ENCODE measurements at regions of chr11 and their contacts with region 1.

Region 1: DNA sequence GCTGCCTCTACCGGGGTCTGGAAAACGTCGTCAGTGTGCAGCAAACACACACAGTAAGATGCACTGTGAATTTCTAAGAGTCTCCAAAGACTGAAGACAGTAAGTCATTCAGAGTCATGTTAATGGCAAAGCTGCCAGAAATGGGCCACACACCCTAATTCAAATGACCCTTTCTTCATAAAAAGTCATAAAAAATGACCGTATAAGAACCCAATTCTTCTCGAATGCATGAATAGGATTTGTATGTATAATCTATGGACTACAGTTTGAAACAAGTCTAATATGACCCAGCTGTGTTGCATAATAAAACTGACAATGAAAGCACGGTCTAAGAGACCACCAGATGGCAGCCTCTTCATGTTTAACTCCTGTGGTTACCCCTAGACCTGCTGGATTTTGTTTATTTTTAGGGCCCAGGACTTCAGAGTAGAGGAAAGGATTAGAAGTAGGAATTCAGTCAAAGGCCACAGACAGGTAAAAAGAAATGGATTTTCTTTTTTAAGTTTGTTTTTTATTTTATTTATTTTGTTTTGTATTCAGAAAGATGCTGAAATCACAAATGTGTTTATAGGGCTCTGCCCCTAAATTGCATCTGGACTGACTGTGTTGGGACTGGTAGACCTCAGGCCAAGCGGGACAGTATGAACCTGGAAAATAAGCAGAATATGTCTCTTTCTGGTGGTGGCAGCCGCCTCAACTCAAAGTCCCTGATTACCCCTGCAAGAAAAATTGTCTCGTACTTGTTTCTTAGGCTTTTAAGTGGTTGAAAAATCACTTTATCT is 32.1 kb upstream of the SLC5A12 start:
- DNase-seq: peak; percentile 43 to 66 (median 58)
- ATAC-seq: peak; percentile 75
- H3K4me3 ChIP-seq: no peak overlapping the region
- H3K27ac ChIP-seq: no peak overlapping the region
- H3K4me1 ChIP-seq: no peaks in the 10 kb centered on the region
- H3K27me3 ChIP-seq: no peaks in the 10 kb centered on the region
- CTCF ChIP-seq: peak; percentile 26 to 78 (median 75)
- POLR2A ChIP-seq: no peak

Region 2: GRCh38 chr11:27153136-27153535 is 399.2 kb after region 1 on chr11:
- intact Hi-C with region 1: loop called (anchors 5 kb)
- DNase-seq: no peak
- ATAC-seq: no peak
- H3K4me3 ChIP-seq: no peak overlapping the region
- H3K27ac ChIP-seq: no peak overlapping the region
- H3K4me1 ChIP-seq: no peaks in the 10 kb centered on the region
- H3K27me3 ChIP-seq: no peaks in the 10 kb centered on the region
- CTCF ChIP-seq: no peak
- POLR2A ChIP-seq: no peak

Region 3: DNA sequence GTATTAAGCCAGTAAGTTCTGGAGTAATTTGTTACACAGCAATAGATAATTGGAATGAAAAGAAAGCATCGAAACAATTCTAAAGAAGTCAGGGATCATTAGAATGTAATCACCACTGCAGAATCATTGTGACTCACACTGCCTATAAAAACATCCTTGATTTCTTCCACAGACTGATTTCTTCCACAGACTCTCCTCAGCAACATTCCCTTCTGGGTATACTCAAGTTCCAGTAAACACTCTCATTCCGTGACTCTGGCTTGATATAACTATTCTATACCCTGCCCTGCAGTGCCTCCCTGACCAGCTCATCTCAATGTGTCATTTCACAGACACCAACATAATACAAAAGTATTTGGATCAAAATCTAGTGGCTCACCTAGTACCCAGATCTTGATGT is 407.2 kb after region 1 on chr11:
- intact Hi-C with region 1: loop called (anchors 5 kb)
- DNase-seq: no peak
- ATAC-seq: no peak
- H3K4me3 ChIP-seq: no peak overlapping the region
- H3K27ac ChIP-seq: no peak overlapping the region
- H3K4me1 ChIP-seq: no peaks in the 10 kb centered on the region
- H3K27me3 ChIP-seq: no peaks in the 10 kb centered on the region
- CTCF ChIP-seq: no peak
- POLR2A ChIP-seq: no peak

Measured in body of pancreas (tissue), 4 donors.